ENCODE measurements at regions of chr6 and their contacts with region 1.

Region 1: GRCh38 chr6:33771146-33772081 is 17.5 kb downstream of the LEMD2 start:
- DNase-seq: peak; percentile 27 to 81 (median 65)
- ATAC-seq: peak; percentile 82
- H3K4me3 ChIP-seq: no peak overlapping the region
- H3K4me3 Mint-ChIP-seq: no peak overlapping the region
- H3K27ac ChIP-seq: no peak overlapping the region
- H3K27ac Mint-ChIP-seq: peak overlapping the region; percentile 58
- H3K4me1 ChIP-seq: no peaks in the 10 kb centered on the region
- H3K4me1 Mint-ChIP-seq: peaks cover 9% of the 10 kb centered on the region
- H3K27me3 ChIP-seq: no peaks in the 10 kb centered on the region
- H3K27me3 Mint-ChIP-seq: peaks cover 9% of the 10 kb centered on the region
- CTCF ChIP-seq: peak; percentile 95

Region 2: GRCh38 chr6:33732826-33733708 is 38.3 kb before region 1 on chr6:
- CTCF ChIA-PET with region 1: no interaction called
- POLR2A ChIA-PET with region 1: no interaction called
- intact Hi-C with region 1: no loop called
- DNase-seq: no peak
- ATAC-seq: no peak
- H3K4me3 ChIP-seq: no peak overlapping the region
- H3K4me3 Mint-ChIP-seq: no peak overlapping the region
- H3K27ac ChIP-seq: no peak overlapping the region
- H3K27ac Mint-ChIP-seq: no peak overlapping the region
- H3K4me1 ChIP-seq: no peaks in the 10 kb centered on the region
- H3K4me1 Mint-ChIP-seq: no peaks in the 10 kb centered on the region
- H3K27me3 ChIP-seq: no peaks in the 10 kb centered on the region
- H3K27me3 Mint-ChIP-seq: no peaks in the 10 kb centered on the region
- CTCF ChIP-seq: no peak

Region 3: DNA sequence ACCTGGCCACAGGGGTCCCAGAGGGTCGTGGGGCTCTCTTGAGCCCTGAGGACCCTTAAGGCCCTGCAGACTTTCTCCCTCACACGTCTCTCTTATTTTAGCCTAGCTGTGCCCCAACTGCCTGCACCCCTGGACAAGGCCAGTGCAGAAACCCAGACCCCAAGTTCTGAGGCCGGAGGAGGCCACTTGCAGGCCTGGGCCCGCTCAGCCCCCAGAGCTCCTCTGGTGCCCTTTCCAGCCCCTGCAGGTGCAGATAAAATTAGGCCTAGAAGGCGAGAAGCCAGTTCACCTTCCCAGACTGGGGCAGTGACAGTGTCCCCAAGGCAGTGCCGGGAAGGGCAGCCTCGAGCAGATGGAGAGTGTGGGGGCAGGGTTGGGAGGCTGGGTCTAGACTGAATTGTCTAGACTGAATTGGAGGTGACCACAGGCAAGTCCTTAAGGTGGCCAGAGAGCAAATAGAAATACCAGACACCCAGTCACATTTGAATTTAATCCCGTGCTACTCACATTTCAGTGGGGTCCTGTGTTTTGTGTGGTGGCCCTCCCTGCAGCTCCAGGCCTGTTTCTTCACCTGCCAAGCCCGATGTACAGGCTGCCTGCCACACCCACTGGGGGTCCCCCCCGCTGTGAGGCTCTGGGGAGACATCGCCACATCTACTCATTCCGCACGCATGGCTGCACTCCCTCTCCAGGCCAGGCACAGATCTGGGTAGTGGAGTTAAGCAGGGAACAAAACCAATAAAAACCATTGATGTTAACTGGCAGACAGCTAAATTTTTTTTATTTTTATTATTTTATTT is 16.1 kb before region 1 on chr6:
- CTCF ChIA-PET with region 1: interaction called, 45 read pairs
- POLR2A ChIA-PET with region 1: no interaction called
- intact Hi-C with region 1: no loop called
- DNase-seq: no peak
- ATAC-seq: no peak
- H3K4me3 ChIP-seq: no peak overlapping the region
- H3K4me3 Mint-ChIP-seq: no peak overlapping the region
- H3K27ac ChIP-seq: no peak overlapping the region
- H3K27ac Mint-ChIP-seq: no peak overlapping the region
- H3K4me1 ChIP-seq: no peaks in the 10 kb centered on the region
- H3K4me1 Mint-ChIP-seq: no peaks in the 10 kb centered on the region
- H3K27me3 ChIP-seq: no peaks in the 10 kb centered on the region
- H3K27me3 Mint-ChIP-seq: no peaks in the 10 kb centered on the region
- CTCF ChIP-seq: no peak

Region 4: GRCh38 chr6:33860706-33861474 is 89.5 kb after region 1 on chr6:
- CTCF ChIA-PET with region 1: interaction called, 10 read pairs
- POLR2A ChIA-PET with region 1: no interaction called
- intact Hi-C with region 1: no loop called
- DNase-seq: peak in 5 of 9 experiments; percentile 16 to 62 (median 41)
- ATAC-seq: peak; percentile 27
- H3K4me3 ChIP-seq: no peak overlapping the region
- H3K4me3 Mint-ChIP-seq: peak overlapping the region; percentile 21
- H3K27ac ChIP-seq: no peak overlapping the region
- H3K27ac Mint-ChIP-seq: no peak overlapping the region
- H3K4me1 ChIP-seq: peaks cover 57% of the 10 kb centered on the region
- H3K4me1 Mint-ChIP-seq: peaks cover 71% of the 10 kb centered on the region
- H3K27me3 ChIP-seq: peaks cover 0 to 23% of the 10 kb centered on the region in 2 experiments
- H3K27me3 Mint-ChIP-seq: peaks cover 8% of the 10 kb centered on the region
- CTCF ChIP-seq: no peak

Region 5: GRCh38 chr6:33926451-33926850 is 155.0 kb after region 1 on chr6:
- CTCF ChIA-PET with region 1: interaction called, 12 read pairs
- POLR2A ChIA-PET with region 1: no interaction called
- intact Hi-C with region 1: loop called in 1 of 2 experiments (anchors 10 kb)
- DNase-seq: no peak
- ATAC-seq: no peak
- H3K4me3 ChIP-seq: no peak overlapping the region
- H3K4me3 Mint-ChIP-seq: no peak overlapping the region
- H3K27ac ChIP-seq: no peak overlapping the region
- H3K27ac Mint-ChIP-seq: no peak overlapping the region
- H3K4me1 ChIP-seq: peaks cover 14% of the 10 kb centered on the region
- H3K4me1 Mint-ChIP-seq: peaks cover 16% of the 10 kb centered on the region
- H3K27me3 ChIP-seq: no peaks in the 10 kb centered on the region
- H3K27me3 Mint-ChIP-seq: no peaks in the 10 kb centered on the region
- CTCF ChIP-seq: no peak

Region 6: GRCh38 chr6:34055223-34055933 is 284.0 kb after region 1 on chr6:
- CTCF ChIA-PET with region 1: interaction called, 11 read pairs
- POLR2A ChIA-PET with region 1: no interaction called
- intact Hi-C with region 1: no loop called
- DNase-seq: peak; percentile 30 to 77 (median 66)
- ATAC-seq: peak; percentile 84
- H3K4me3 ChIP-seq: no peak overlapping the region
- H3K4me3 Mint-ChIP-seq: no peak overlapping the region
- H3K27ac ChIP-seq: no peak overlapping the region
- H3K27ac Mint-ChIP-seq: no peak overlapping the region
- H3K4me1 ChIP-seq: no peaks in the 10 kb centered on the region
- H3K4me1 Mint-ChIP-seq: no peaks in the 10 kb centered on the region
- H3K27me3 ChIP-seq: no peaks in the 10 kb centered on the region
- H3K27me3 Mint-ChIP-seq: peaks cover 9% of the 10 kb centered on the region
- CTCF ChIP-seq: peak; percentile 62

Region 7: DNA sequence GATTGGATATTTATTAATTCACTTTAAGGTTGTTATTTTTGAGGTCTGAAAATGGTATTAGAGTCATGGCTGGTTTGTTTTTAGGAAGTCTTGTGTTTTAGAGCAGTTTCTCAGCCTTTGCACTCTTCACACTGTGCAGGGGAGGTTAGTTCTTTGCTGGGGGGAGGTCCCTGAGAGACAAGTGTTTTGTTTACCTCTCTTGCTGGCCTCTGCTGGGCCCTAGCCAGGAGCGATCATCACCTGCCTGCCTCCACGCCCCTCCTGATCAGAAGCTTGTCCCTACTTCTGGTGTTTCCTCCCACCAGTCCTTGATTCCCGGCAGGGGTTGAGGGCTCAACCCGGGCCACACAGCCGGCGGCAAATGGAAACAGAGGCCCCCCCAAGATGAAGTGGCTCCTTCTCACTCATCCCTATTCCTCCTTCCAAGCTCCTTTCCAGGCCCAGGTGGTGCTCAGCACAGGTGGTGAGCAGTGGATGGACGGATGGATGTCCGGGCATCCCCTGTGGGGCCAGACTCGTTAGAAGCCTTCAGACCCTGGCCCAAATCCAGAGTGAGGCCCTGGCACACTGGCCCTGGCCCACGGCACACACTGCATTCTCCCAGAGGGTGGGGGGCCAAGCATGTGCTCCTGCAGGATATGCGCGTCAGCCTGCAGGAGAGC is 323.2 kb after region 1 on chr6:
- CTCF ChIA-PET with region 1: no interaction called
- POLR2A ChIA-PET with region 1: no interaction called
- intact Hi-C with region 1: no loop called
- DNase-seq: no peak
- ATAC-seq: no peak
- H3K4me3 ChIP-seq: no peak overlapping the region
- H3K4me3 Mint-ChIP-seq: no peak overlapping the region
- H3K27ac ChIP-seq: no peak overlapping the region
- H3K27ac Mint-ChIP-seq: no peak overlapping the region
- H3K4me1 ChIP-seq: no peaks in the 10 kb centered on the region
- H3K4me1 Mint-ChIP-seq: no peaks in the 10 kb centered on the region
- H3K27me3 ChIP-seq: no peaks in the 10 kb centered on the region
- H3K27me3 Mint-ChIP-seq: peaks cover 33% of the 10 kb centered on the region
- CTCF ChIP-seq: no peak